BJ (cell line): ENCODE measurements at regions of chr15 and their contacts with region 1.

Region 1: DNA sequence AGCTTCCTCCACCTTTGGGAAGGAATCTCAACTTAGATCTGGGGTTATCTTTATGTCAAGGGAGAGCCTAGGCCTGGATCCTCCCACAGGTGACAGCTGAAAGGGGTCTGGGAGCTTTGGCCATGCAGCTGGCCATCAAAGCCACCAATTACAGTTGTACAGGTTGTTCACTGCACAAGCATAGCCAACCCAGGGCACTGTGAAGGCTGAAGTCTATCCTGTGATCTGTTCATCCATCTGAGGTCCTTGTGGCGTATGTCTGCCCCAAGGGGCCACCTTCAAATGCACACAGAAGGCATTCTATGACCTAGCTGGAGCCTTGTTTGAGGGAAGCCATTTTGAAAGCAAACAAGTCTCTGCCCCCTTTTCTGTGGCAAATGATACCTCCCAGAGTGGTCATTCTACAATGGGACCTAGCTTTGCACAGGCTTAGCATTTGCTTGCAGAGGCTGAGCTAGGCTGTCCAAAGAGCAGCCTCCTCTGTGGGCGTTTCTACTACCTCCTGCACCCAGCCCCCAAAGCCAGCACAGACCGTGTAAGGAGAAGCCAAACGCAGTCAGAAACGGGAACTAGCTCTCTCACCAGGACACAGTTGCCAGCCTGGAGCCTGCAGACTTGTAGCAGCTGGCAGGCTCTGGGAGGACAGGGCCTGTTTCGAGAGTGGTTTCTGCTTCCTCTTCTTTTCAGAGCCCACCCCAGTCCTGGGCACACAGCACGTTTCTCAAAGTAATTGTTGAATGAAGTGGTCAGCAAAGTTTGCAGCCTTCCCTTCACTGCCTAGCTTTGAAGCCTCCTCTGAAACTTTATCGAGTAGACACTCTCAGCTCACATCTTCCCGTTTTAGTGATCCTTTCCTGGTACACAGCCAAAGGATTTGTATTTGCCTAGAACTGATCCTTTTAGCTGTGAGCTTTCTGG is 157.3 kb upstream of the SMAD3 start:
- DNase-seq: no peak
- H3K4me3 ChIP-seq: no peak overlapping the region
- H3K27me3 ChIP-seq: no peaks in the 10 kb centered on the region
- CTCF ChIP-seq: no peak

Region 2: GRCh38 chr15:66774001-66774814 is 133.9 kb before region 1 on chr15:
- CTCF ChIA-PET with region 1: no interaction called
- POLR2A ChIA-PET with region 1: no interaction called
- DNase-seq: no peak
- H3K4me3 ChIP-seq: no peak overlapping the region
- H3K27me3 ChIP-seq: no peaks in the 10 kb centered on the region
- CTCF ChIP-seq: peak; percentile 95

Region 3: DNA sequence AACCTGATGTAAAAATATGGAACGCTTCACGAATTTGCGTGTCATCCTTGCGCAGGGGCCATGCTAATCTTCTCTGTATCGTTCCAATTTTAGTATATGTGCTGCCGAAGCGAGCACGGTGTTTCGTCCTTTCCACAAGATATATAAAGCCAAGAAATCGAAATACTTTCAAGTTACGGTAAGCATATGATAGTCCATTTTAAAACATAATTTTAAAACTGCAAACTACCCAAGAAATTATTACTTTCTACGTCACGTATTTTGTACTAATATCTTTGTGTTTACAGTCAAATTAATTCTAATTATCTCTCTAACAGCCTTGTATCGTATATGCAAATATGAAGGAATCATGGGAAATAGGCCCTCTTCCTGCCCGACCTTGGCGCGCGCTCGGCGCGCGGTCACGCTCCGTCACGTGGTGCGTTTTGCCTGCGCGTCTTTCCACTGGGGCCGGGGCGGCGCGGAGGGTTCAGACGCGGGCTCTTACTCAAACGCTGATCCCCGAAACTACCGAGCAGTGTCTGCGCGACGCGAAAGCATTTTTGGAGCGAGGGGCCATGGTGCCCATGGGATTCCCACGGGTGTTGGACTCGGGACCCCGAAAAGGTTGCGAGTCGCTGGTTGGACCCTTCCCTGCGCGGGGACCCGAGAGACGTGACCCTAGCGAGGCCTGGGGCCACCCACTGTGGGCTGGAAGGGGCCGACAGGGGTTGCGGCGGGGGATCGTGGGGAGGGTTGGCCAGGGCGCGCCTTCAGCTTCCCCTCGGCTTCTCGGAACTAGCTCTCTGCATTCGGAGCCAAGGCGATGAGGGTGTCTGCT is 932.1 kb after region 1 on chr15 and contains the start of gene RNU6-1:
- CTCF ChIA-PET with region 1: no interaction called
- POLR2A ChIA-PET with region 1: interaction called, 16 read pairs
- DNase-seq: peak; percentile 72
- H3K4me3 ChIP-seq: peak within 1 kb of the TSS; percentile 67
- H3K27me3 ChIP-seq: peaks cover 17% of the 10 kb centered on the region
- CTCF ChIP-seq: no peak
- polyA plus RNA-seq, gene RNU6-1: not detected in 2 replicates